ENCODE measurements at regions of chr10 and their contacts with region 1.

Region 1: DNA sequence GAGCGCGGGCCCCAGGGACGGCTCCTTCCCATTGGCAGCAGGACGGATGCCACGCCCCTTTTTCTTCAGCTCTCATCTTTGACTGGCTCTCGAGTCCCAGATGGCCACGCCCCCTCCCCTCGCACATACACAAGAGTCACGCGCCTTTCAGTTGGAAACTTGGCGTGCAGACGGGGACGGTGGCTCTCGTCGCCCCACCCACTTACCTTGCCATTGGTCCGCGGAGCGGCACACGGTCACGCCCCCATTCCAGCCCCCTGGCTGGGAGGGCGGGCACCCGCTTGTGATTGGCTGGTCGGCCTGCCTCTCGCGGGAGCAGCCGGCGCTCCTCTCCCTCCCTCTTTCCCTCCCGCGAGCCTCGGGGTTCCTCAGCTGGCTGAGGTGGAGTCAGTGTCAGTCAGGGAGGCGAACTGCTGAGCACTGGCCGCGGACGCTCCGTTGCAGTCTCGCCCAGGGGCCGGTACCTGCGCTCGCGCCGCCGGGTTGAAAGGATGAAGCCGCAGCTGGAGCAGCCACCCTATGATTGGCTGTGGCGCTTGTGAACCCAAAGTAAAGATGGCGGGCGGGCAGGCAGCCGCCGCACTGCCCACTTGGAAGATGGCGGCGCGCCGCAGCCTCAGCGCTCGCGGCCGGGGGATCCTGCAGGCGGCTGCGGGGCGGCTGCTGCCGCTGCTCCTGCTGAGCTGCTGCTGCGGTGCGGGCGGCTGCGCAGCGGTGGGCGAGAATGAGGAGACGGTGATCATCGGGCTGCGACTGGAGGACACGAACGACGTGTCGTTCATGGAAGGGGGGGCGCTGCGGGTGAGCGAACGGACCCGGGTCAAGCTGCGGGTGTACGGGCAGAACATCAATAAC is at the start of gene CNNM2:
- H3K4me3 Mint-ChIP-seq: peak within 1 kb of the TSS; percentile 99
- H3K27ac Mint-ChIP-seq: peak within 1 kb of the TSS; percentile 95
- H3K4me1 Mint-ChIP-seq: peaks cover 52% of the 10 kb centered on the region
- H3K27me3 Mint-ChIP-seq: peaks cover 39% of the 10 kb centered on the region

Region 2: DNA sequence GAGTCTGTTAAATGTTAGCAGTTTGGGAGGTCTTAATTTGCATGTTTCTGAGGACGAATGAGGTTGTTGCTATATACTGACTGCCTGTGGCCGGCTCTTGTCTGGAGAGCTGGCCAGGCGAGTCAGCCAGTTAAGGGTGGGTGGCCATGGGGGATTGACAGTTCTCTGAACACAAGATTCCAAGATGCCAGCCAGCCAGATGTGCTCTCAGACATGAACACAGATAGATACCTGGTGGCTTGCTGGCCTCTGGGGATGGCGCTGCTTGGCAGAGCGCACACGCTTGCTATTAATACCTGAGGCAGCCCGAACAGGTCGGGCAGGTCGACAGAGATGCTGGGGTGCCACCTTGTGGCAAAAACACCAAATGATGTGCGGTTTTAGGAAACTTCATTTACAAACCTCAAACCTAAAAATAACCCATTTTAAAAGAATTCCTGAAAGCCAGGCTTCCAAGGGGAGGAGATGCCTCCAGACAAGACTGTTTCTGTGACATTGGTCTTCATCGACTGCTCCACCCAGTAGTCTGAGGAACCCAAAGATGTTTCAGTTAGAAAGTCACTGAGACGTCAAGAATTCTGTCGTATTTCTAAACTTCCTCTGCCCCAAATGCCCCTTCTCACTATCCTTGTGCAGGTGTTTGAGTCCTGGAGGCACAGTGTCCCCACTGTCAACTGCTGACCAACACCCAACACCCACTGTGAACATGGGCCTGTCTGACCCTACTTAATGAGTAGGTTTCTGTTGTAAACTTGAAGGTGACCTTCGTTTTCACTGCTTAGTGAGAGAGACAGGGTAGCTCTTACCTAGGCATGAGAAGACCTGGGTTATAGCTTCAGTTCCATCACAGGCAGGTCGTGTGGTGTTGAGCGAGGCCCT is 151.5 kb after region 1 on chr10:
- intact Hi-C with region 1: loop called (anchors 1 kb)
- H3K4me3 Mint-ChIP-seq: no peak overlapping the region
- H3K27ac Mint-ChIP-seq: peak overlapping the region; percentile 10
- H3K4me1 Mint-ChIP-seq: peaks cover 27% of the 10 kb centered on the region
- H3K27me3 Mint-ChIP-seq: no peaks in the 10 kb centered on the region

Region 3: GRCh38 chr10:103192451-103193106 is 274.4 kb after region 1 on chr10:
- intact Hi-C with region 1: loop called (anchors 5 kb)
- H3K4me3 Mint-ChIP-seq: peak overlapping the region; percentile 98
- H3K27ac Mint-ChIP-seq: peak overlapping the region; percentile 100
- H3K4me1 Mint-ChIP-seq: peaks cover 56% of the 10 kb centered on the region
- H3K27me3 Mint-ChIP-seq: no peaks in the 10 kb centered on the region

Region 4: GRCh38 chr10:103333925-103334520 is 415.8 kb after region 1 on chr10:
- intact Hi-C with region 1: loop called (anchors 5 kb)
- H3K4me3 Mint-ChIP-seq: no peak overlapping the region
- H3K27ac Mint-ChIP-seq: no peak overlapping the region
- H3K4me1 Mint-ChIP-seq: no peaks in the 10 kb centered on the region
- H3K27me3 Mint-ChIP-seq: no peaks in the 10 kb centered on the region